ENCODE measurements at regions of chr9 and their contacts with region 1.

Region 1: DNA sequence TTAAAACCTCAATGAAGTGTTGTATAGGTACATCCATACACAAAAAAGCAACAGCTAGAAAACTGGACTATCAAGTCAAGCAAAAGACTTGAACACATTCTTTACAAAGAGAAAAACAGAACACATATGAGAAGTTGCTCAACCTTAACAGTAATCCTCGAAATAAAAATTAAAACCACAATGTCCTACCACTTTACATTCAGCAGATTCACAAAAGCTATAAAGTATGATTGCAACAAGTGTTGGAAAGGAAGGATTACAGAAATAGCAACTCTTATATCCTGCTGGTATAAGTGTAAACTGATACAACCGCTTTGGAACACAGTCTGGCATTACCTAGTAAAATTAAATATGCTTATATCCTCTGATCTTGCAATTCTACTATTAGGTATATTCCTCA is 28.5 kb upstream of the GOLGA1 start:
- DNase-seq: no peak
- H3K4me3 ChIP-seq: no peak overlapping the region
- H3K27ac ChIP-seq: no peak overlapping the region
- H3K4me1 ChIP-seq: no peaks in the 10 kb centered on the region
- H3K27me3 ChIP-seq: no peaks in the 10 kb centered on the region
- CTCF ChIP-seq: no peak

Region 2: DNA sequence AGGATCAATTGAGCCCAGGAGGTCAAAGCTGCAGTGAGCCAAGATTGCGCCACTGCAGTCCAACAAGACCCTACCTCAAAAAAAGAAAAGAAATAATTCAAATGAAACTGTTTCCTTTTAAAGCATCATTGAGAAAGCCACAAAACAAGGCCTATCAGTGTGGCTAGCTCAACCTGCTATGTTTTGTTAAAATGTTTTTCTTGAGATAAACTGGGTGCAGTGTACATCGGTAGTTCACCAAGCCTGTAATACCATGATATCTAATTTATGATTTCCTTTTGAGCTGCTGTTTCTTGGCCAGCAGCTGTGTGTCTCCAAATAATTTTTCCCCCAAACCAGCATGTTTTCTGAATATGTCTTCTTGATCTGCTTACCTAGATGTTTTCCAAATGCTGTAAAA is 68.8 kb after region 1 on chr9:
- CTCF ChIA-PET with region 1: interaction called, 12 read pairs
- POLR2A ChIA-PET with region 1: no interaction called
- intact Hi-C with region 1: no loop called
- DNase-seq: no peak
- H3K4me3 ChIP-seq: no peak overlapping the region
- H3K27ac ChIP-seq: no peak overlapping the region
- H3K4me1 ChIP-seq: no peaks in the 10 kb centered on the region
- H3K27me3 ChIP-seq: no peaks in the 10 kb centered on the region
- CTCF ChIP-seq: no peak

Measured in PC-9 (cell line).